Left cardiac atrium (tissue), 4 donors: ENCODE measurements at regions of chr17 and their contacts with region 1.

Region 1: GRCh38 chr17:74429604-74430384 is 2.1 kb upstream of the GPRC5C start:
- DNase-seq: no peak
- ATAC-seq: peak in 1 of 2 donors; percentile 25

Region 2: DNA sequence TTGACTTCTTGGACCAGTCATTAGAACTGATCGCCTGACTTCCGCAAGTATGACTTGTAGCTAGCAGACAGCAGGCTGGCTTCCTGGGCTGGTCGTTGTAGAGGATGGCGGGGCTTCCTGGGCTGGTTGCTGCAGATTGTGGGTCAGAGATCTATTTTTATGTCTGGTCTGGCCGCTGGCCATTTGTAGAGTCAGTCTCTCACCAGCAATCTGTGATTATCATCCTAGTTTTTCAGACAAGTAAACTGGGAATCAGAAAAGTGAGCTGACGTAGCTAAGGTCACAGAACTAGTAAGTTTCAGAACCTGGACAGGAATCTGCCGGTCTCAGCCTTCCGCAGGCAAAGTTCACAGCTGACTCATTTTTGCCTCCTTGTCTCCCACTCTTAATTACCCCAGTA is 43.4 kb before region 1 on chr17:
- intact Hi-C with region 1: loop called in 1 of 2 experiments (anchors 5 kb)
- DNase-seq: peak; percentile 75
- ATAC-seq: peak; percentile 76 to 83